Esophagus muscularis mucosa (tissue), 4 donors: ENCODE measurements at regions of chr3 and their contacts with region 1.

Region 1: GRCh38 chr3:40476478-40477470 is at the start of gene ZNF619:
- DNase-seq: peak; percentile 95
- H3K4me3 ChIP-seq: peak within 1 kb of the TSS; percentile 66 to 88 (median 72)
- H3K27ac ChIP-seq: peak within 1 kb of the TSS; percentile 71 to 75 (median 73)
- H3K4me1 ChIP-seq: peaks cover 7 to 15% (median 13%) of the 10 kb centered on the region in 4 donors
- H3K27me3 ChIP-seq: no peaks in the 10 kb centered on the region
- CTCF ChIP-seq: no peak
- EP300 ChIP-seq: no peak
- POLR2A ChIP-seq: no peak
- total RNA-seq, gene ZNF619: 2.8 to 5.4 (median 3.5) TPM

Region 2: DNA sequence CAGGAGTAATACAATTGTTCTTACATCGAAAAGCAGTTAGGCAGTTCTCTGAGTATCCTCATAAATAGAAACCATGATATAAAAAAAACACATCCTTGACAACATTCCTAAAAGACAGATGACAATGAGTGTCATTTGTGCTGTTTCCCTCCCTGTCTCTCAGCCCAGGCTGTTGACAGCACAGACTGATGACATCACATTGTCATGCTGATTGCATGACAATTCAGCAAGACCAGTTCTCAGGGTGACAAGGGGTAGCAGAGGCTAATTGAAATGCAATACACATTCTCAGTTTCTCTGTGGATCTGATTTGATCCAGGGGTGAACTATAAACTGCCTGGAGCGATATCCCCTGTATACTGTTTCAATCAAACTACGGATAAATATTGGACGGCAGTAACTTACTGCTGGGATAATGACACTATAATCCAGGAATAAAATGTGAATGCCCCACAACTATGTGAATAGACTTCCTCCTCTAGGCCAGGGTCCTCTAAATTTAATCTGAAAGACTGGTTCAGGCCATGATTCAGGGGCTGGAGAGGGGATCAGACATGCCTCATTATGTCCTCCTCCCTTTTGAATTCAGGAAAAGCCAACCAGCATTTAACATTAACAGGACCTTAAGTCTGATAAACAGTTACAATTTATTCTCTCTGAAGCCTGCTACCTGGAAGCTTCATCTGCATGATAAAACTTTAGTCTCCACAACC is 184.0 kb before region 1 on chr3:
- intact Hi-C with region 1: no loop called
- DNase-seq: no peak
- H3K4me3 ChIP-seq: no peak overlapping the region
- H3K27ac ChIP-seq: no peak overlapping the region
- H3K4me1 ChIP-seq: no peaks in the 10 kb centered on the region
- H3K27me3 ChIP-seq: no peaks in the 10 kb centered on the region
- CTCF ChIP-seq: no peak
- EP300 ChIP-seq: no peak
- POLR2A ChIP-seq: no peak

Region 3: GRCh38 chr3:40505599-40506462 is 29.1 kb after region 1 on chr3 and contains the start of gene ZNF620:
- intact Hi-C with region 1: loop called (anchors 2 kb)
- DNase-seq: peak; percentile 92
- H3K4me3 ChIP-seq: peak within 1 kb of the TSS; percentile 63 to 71 (median 66)
- H3K27ac ChIP-seq: peak within 1 kb of the TSS; percentile 75 to 84 (median 82)
- H3K4me1 ChIP-seq: peaks cover 12 to 23% (median 19%) of the 10 kb centered on the region in 4 donors
- H3K27me3 ChIP-seq: no peaks in the 10 kb centered on the region
- CTCF ChIP-seq: peak; percentile 26 to 30 (median 28)
- EP300 ChIP-seq: no peak
- POLR2A ChIP-seq: no peak
- total RNA-seq, gene ZNF620: 2.2 to 6.5 (median 2.5) TPM

Region 4: GRCh38 chr3:40524568-40525285 is 48.0 kb after region 1 on chr3 and contains the start of gene ZNF621:
- intact Hi-C with region 1: loop called (anchors 5 kb)
- DNase-seq: peak; percentile 95
- H3K4me3 ChIP-seq: peak within 1 kb of the TSS; percentile 67 to 93 (median 82)
- H3K27ac ChIP-seq: peak within 1 kb of the TSS; percentile 82 to 92 (median 90)
- H3K4me1 ChIP-seq: peaks cover 17 to 34% (median 22%) of the 10 kb centered on the region in 4 donors
- H3K27me3 ChIP-seq: no peaks in the 10 kb centered on the region
- CTCF ChIP-seq: no peak
- EP300 ChIP-seq: no peak
- POLR2A ChIP-seq: peak; percentile 62
- total RNA-seq, gene ZNF621: 12.9 to 22.8 (median 16.8) TPM